ENCODE measurements at regions of chr6 and their contacts with region 1.

Region 1: GRCh38 chr6:97294451-97294850 is 11.4 kb upstream of the MMS22L start:
- DNase-seq: no peak
- H3K4me3 ChIP-seq: no peak overlapping the region
- H3K27ac ChIP-seq: no peak overlapping the region
- H3K4me1 ChIP-seq: no peaks in the 10 kb centered on the region
- H3K27me3 ChIP-seq: no peaks in the 10 kb centered on the region
- CTCF ChIP-seq: no peak
- POLR2A ChIP-seq: no peak

Region 2: GRCh38 chr6:95545226-95545625 is 1749.2 kb before region 1 on chr6:
- intact Hi-C with region 1: loop called (anchors 10 kb)
- DNase-seq: no peak
- H3K4me3 ChIP-seq: no peak overlapping the region
- H3K27ac ChIP-seq: peak overlapping the region in 1 of 2 donors; percentile 76
- H3K4me1 ChIP-seq: no peaks in the 10 kb centered on the region
- H3K27me3 ChIP-seq: no peaks in the 10 kb centered on the region
- CTCF ChIP-seq: no peak
- POLR2A ChIP-seq: no peak

Region 3: DNA sequence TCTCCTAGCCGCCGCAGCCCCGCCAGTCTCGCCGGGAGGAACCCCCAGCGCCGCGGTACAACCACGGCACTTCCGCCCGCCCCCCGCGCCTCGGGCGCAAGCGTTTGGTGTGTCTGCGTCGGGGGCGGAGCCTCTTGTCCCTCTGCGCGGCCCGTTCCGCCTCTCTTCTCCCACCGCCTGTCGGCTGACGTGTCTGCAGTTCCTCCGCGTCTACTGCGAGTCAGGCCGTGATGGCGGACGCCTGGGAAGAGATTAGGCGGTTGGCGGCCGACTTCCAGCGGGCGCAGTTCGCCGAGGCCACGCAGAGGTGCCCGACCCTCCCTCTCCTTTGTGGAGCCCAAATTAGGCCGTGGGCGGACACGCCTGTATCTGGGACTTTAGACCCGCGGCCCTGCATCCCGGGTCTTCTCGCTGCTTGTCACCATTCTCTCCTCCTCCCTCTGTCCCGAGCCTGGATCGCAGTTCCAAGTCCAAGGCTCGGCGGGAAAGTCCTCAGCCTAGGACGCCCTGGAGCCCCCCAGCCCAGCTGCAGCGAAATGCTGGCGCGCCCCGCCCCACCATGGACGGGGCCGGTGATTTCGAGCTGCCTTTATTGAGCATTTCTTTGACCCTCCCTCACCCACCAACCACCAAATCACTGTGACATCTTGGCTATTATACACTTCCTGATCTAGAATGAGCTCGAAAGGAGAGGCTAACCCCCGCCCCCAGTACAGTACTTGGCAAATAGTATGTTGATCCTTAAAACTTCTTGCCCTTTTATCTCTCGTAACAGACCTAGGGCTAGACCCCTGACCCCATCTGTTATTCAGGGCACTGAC is 772.6 kb before region 1 on chr6 and contains the start of gene UFL1:
- intact Hi-C with region 1: no loop called
- DNase-seq: peak; percentile 89 to 92
- H3K4me3 ChIP-seq: peak within 1 kb of the TSS; percentile 84 to 90 (median 87)
- H3K27ac ChIP-seq: peak within 1 kb of the TSS; percentile 94 to 95
- H3K4me1 ChIP-seq: no peaks in the 10 kb centered on the region
- H3K27me3 ChIP-seq: no peaks in the 10 kb centered on the region
- CTCF ChIP-seq: no peak
- POLR2A ChIP-seq: peak; percentile 76
- total RNA-seq, gene UFL1: 22.6 to 29.9 (median 28.0) TPM